ENCODE measurements at regions of chr6 and their contacts with region 1.

Region 1: GRCh38 chr6:119717942-119718341 is 368.4 kb upstream of the MAN1A1 start:
- DNase-seq: no peak
- H3K4me3 ChIP-seq: no peak overlapping the region
- H3K27ac ChIP-seq: no peak overlapping the region
- H3K4me1 ChIP-seq: no peaks in the 10 kb centered on the region
- H3K27me3 ChIP-seq: no peaks in the 10 kb centered on the region
- CTCF ChIP-seq: no peak
- POLR2A ChIP-seq: no peak

Region 2: DNA sequence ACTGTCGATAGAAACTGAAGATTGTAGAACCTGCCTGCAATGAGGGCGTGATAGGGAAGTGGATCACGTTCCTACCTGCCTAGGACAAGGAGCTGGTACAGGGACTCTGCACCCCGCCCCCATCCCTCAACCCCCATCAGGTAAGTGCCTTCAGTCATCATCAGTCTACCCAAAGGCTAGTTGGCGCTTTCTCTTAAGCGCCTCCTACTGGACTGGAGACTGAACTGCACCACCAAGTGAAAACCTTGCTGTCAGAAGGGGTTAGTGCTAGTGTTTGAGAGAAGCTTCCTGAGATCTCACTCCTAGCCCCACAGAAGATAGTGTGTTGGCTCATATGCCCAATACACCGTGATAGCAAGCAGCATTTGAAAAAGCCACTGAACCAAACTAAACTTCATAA is 338.1 kb after region 1 on chr6:
- intact Hi-C with region 1: loop called (anchors 10 kb)
- DNase-seq: no peak
- H3K4me3 ChIP-seq: no peak overlapping the region
- H3K27ac ChIP-seq: no peak overlapping the region
- H3K4me1 ChIP-seq: no peaks in the 10 kb centered on the region
- H3K27me3 ChIP-seq: no peaks in the 10 kb centered on the region
- CTCF ChIP-seq: no peak
- POLR2A ChIP-seq: no peak